Activated CD4-positive, alpha-beta memory T cell treated with anti-CD3 and anti-CD28 coated beads for 36 hours (primary cell): ENCODE measurements at regions of chr1 and their contacts with region 1.

Region 1: GRCh38 chr1:239719642-239720258 is 333.4 kb downstream of the CHRM3 start:
- DNase-seq: peak; percentile 68
- H3K4me3 Mint-ChIP-seq: peak overlapping the region; percentile 88
- H3K27ac Mint-ChIP-seq: peak overlapping the region; percentile 98
- H3K4me1 Mint-ChIP-seq: peaks cover 43% of the 10 kb centered on the region
- H3K27me3 Mint-ChIP-seq: no peaks in the 10 kb centered on the region

Region 2: GRCh38 chr1:239547987-239548386 is 171.8 kb before region 1 on chr1:
- CTCF ChIA-PET with region 1: no interaction called
- POLR2A ChIA-PET with region 1: interaction called, 3 read pairs
- intact Hi-C with region 1: loop called (anchors 2 kb)
- DNase-seq: no peak
- H3K4me3 Mint-ChIP-seq: no peak overlapping the region
- H3K27ac Mint-ChIP-seq: peak overlapping the region; percentile 54
- H3K4me1 Mint-ChIP-seq: peaks cover 15% of the 10 kb centered on the region
- H3K27me3 Mint-ChIP-seq: no peaks in the 10 kb centered on the region

Region 3: DNA sequence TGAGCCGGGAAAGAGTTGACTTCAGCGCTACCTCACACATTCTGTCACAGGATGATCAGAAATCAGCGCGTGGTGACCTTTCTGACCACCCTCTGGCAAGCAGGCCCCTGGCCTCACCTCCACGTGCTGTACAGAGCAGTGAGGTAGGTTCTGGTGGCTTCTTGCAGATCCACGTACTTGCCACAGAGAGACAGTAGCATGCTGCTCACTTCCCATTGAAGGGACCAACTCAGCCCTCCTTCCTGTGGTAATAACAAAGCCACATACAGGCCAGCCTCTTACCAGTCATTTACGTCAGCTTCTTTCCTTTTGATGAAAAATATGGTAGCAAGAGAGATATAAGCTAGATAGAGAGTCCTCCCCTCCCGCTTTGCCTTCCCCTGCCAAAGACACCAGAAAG is 132.7 kb before region 1 on chr1:
- CTCF ChIA-PET with region 1: no interaction called
- POLR2A ChIA-PET with region 1: no interaction called
- intact Hi-C with region 1: loop called (anchors 10 kb)
- DNase-seq: peak; percentile 37
- H3K4me3 Mint-ChIP-seq: no peak overlapping the region
- H3K27ac Mint-ChIP-seq: no peak overlapping the region
- H3K4me1 Mint-ChIP-seq: peaks cover 7% of the 10 kb centered on the region
- H3K27me3 Mint-ChIP-seq: peaks cover 9% of the 10 kb centered on the region

Region 4: GRCh38 chr1:239708622-239709021 is 11.1 kb before region 1 on chr1:
- CTCF ChIA-PET with region 1: interaction called, 6 read pairs
- POLR2A ChIA-PET with region 1: interaction called, 17 read pairs
- intact Hi-C with region 1: loop called (anchors 1 kb)
- DNase-seq: no peak
- H3K4me3 Mint-ChIP-seq: no peak overlapping the region
- H3K27ac Mint-ChIP-seq: peak overlapping the region; percentile 26
- H3K4me1 Mint-ChIP-seq: peaks cover 25% of the 10 kb centered on the region
- H3K27me3 Mint-ChIP-seq: no peaks in the 10 kb centered on the region

Region 5: GRCh38 chr1:239792157-239792556 is 72.4 kb after region 1 on chr1:
- CTCF ChIA-PET with region 1: interaction called, 4 read pairs
- POLR2A ChIA-PET with region 1: no interaction called
- intact Hi-C with region 1: loop called (anchors 1 kb)
- DNase-seq: peak; percentile 51
- H3K4me3 Mint-ChIP-seq: no peak overlapping the region
- H3K27ac Mint-ChIP-seq: no peak overlapping the region
- H3K4me1 Mint-ChIP-seq: peaks cover 14% of the 10 kb centered on the region
- H3K27me3 Mint-ChIP-seq: no peaks in the 10 kb centered on the region

Region 6: GRCh38 chr1:239814303-239814881 is 94.6 kb after region 1 on chr1:
- CTCF ChIA-PET with region 1: interaction called, 18 read pairs
- POLR2A ChIA-PET with region 1: interaction called, 19 read pairs
- intact Hi-C with region 1: loop called (anchors 1 kb)
- DNase-seq: peak; percentile 76
- H3K4me3 Mint-ChIP-seq: peak overlapping the region; percentile 17
- H3K27ac Mint-ChIP-seq: peak overlapping the region; percentile 39
- H3K4me1 Mint-ChIP-seq: peaks cover 42% of the 10 kb centered on the region
- H3K27me3 Mint-ChIP-seq: no peaks in the 10 kb centered on the region

Region 7: DNA sequence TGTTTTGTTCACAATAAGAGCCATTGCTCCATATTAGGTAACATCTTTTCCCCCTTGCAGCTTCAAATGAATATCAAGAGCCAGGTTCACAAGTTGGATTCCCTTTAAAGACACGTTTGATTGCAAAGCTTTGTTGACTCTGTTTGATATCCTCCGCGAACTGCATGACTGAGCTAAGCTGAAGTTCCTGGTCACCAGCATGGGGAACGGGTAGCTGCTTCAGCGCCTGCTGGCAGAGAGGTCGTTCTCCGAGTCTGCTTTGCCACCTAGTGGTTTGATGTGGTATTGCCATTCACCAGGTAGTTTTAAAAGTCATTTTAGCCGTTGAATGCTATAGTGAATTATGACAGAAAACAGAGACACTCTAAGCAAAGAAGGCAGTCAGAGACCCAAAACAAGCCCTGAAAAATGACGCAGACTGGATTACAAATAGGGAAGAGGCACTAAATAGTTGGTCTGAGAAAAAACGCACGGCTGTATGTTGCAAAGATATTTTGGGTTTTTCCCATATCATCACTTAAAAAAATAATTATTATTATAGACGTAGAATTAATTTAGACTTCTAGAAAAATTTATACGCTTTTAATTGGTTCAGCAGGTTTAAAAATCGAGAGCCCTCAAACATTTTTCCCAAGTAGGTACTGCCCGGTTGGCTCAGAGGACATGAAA is 178.4 kb after region 1 on chr1:
- CTCF ChIA-PET with region 1: interaction called, 4 read pairs
- POLR2A ChIA-PET with region 1: no interaction called
- intact Hi-C with region 1: loop called (anchors 5 kb)
- DNase-seq: peak; percentile 81
- H3K4me3 Mint-ChIP-seq: no peak overlapping the region
- H3K27ac Mint-ChIP-seq: no peak overlapping the region
- H3K4me1 Mint-ChIP-seq: peaks cover 2% of the 10 kb centered on the region
- H3K27me3 Mint-ChIP-seq: peaks cover 6% of the 10 kb centered on the region